AG04450 (cell line): ENCODE measurements at regions of chr1 and their contacts with region 1.

Region 1: DNA sequence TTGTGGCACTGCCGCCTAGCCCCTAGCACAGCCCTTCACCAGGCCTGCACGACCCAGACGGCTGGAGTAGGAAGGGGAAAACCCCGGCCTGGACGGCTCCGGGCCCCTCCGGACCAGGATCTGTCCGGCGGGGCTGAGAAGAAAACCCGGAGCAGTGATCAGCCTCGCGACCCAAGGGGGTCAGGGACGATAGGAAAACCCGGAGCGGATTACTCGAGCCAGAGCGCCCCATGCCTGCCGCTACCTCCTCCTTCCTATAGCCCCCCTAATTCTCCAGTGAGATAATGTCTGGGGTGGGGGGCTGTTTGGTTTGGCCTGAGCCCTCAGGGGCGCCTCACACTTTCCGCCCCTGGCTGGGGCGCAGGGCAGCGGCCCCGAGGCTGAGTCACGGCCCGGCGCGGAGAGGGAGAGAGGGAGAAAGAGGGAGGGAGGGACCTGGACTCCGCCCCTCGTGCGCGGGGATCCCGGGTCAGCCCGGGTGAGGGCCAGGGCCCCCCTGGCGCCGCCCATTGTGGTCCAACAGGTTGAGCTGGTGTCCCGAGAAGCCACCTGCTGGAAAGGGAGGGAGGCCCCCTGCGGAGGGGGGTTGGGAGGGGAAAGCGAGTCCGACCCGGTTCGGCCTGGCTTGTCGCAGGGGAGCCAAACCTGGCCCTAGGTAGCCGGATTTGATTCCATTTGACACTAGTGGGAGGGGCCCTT is 1.7 kb upstream of the ZBTB7B start:
- DNase-seq: peak; percentile 52
- H3K4me3 ChIP-seq: peak overlapping the region; percentile 76
- H3K27ac ChIP-seq: peak overlapping the region; percentile 84
- H3K27me3 ChIP-seq: no peaks in the 10 kb centered on the region
- CTCF ChIP-seq: no peak; the same call in none of the 2 replicates

Region 2: DNA sequence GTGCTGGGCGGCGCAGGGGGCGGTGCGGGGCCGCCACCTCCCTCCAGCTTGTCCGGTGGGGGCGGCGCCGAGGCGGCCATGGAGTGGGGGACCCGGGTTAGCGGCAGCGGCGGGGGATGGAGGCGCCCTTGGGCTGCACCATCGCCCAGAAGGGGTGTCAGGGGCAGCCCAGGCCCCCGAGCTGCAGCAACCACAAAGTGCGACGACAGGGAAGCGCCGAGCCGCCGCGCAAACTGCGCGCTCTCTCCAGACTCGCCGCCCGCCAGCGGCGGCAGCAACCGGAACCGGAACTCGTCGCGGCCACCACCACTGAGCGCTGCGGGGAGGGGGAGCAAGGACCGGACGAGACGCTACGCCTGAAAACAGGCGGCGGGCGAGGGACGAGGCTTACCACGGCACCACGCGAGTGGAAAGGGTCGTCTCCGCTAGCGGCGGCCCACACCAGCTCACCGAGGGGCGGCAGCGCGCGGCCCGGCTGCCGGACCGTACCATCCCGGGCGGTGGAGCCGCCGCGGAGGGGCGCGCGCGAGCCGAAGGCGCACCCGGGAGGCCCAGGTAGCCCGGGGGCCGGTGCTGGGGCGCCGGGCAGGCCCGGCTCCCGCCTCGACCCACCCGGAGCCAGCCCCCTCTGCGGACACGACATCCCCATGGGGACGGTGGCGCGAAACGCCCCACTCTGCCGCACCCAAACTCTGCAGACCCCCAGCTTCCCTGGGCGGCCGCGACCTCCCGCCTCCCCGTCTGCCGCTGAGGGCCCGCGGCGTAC is 39.2 kb before region 1 on chr1 and contains the start of gene PYGO2:
- CTCF ChIA-PET with region 1: interaction called, 28 read pairs
- POLR2A ChIA-PET with region 1: interaction called, 4 read pairs
- DNase-seq: no peak
- H3K4me3 ChIP-seq: peak within 1 kb of the TSS; percentile 74
- H3K27ac ChIP-seq: peak within 1 kb of the TSS; percentile 81
- H3K27me3 ChIP-seq: no peaks in the 10 kb centered on the region
- CTCF ChIP-seq: peak; percentile 16
- polyA plus RNA-seq, gene PYGO2: 18.1 and 19.3 TPM in 2 replicates

Region 3: GRCh38 chr1:154982897-154983648 is 17.8 kb before region 1 on chr1 and contains the start of gene FLAD1:
- CTCF ChIA-PET with region 1: interaction called, 27 read pairs
- POLR2A ChIA-PET with region 1: interaction called, 11 read pairs
- DNase-seq: peak; percentile 99
- H3K4me3 ChIP-seq: peak within 1 kb of the TSS; percentile 86
- H3K27ac ChIP-seq: no peak within 1 kb of the TSS
- H3K27me3 ChIP-seq: no peaks in the 10 kb centered on the region
- CTCF ChIP-seq: no peak
- polyA plus RNA-seq, gene FLAD1: 21.1 and 30.2 TPM in 2 replicates